SK-MEL-5 (cell line): ENCODE measurements at regions of chr2 and their contacts with region 1.

Region 1: DNA sequence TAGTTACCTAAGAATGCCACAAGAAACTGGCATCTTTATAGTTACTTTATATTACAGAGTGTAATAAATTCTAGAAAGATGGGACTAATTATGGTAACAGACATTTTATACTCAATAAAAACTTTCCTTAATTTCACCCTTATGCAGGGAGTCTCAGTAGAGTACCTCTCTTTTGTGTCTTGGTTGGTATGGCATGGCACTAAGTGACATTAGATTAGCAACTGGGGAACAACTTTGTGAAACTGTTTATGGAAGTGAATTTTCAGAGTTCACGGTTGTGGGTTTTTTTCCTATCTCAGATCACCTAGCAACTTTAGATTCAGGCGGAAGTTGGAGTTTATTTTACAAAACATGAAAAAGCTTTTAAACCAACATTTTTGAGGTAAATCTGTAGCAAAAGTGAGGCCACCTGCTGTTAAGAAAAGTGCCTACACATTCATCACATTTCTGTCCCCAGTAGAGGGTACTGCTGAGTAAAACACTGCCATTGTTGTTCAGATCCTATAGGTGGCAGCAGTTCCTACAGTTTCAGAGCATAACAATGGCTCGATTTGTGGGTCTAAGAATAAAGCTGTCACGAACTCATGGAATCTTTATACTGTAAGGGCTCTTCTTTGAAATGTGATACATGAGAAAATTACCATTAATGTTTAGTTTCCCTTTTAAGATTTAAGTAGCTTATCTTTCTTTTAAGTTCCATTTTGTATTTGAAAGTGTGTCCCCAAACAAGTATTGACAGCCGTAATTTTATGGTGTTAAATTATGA is 117.6 kb downstream of the CAMKMT start:
- DNase-seq: peak; percentile 93

Region 2: GRCh38 chr2:44044281-44044720 is 435.0 kb before region 1 on chr2:
- in situ Hi-C with region 1: loop called (anchors 25 kb)
- DNase-seq: peak; percentile 93

Region 3: DNA sequence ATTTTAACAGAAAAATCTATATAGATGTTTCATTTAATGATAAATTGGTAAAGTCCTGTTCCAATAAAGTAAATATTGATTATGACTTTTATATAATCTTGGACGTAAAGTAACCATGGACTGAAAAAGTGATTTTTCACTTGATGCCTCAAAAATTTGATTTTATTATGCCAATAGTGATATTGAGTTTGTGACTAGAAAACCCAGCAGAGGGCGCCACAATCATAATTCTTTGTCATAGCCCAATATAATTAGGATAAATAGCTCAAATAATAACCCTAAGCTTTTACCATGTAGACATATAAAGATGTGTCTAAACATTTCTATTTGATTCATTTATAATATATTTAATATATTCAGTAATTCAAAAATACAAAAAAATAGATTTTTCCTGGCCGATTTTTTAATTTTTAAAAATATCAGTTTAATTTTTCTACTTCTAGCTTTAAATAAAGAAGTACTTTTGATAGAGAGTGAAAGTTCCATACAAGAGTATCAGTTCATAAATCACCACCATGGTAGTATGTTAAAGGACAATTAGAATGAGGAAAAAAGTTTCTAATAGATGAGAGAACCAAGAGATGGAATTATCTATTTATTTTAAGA is 86.9 kb before region 1 on chr2:
- in situ Hi-C with region 1: loop called (anchors 10 kb)
- DNase-seq: peak; percentile 76